ENCODE measurements at regions of chr2 and their contacts with region 1.

Region 1: GRCh38 chr2:11688222-11689069 is 18.5 kb upstream of the NTSR2 start:
- DNase-seq: peak; percentile 67 to 89 (median 82)
- ATAC-seq: peak; percentile 88
- H3K4me3 ChIP-seq: peak overlapping the region; percentile 8 to 12
- H3K27ac ChIP-seq: peak overlapping the region in 1 of 2 donors; percentile 42
- H3K4me1 ChIP-seq: peaks cover 0 to 26% of the 10 kb centered on the region in 2 donors
- H3K27me3 ChIP-seq: peaks cover 0 to 10% of the 10 kb centered on the region in 2 donors
- CTCF ChIP-seq: peak; percentile 81 to 84

Region 2: GRCh38 chr2:11477994-11478393 is 210.5 kb before region 1 on chr2:
- intact Hi-C with region 1: no loop called
- DNase-seq: peak in 3 of 4 donors; percentile 79 to 90 (median 82)
- ATAC-seq: peak; percentile 85
- H3K4me3 ChIP-seq: no peak overlapping the region
- H3K27ac ChIP-seq: no peak overlapping the region
- H3K4me1 ChIP-seq: peaks cover 3 to 10% of the 10 kb centered on the region in 2 donors
- H3K27me3 ChIP-seq: peaks cover 17 to 46% of the 10 kb centered on the region in 2 donors
- CTCF ChIP-seq: peak; percentile 80 to 81

Region 3: GRCh38 chr2:11778923-11779757 is 90.7 kb after region 1 on chr2:
- intact Hi-C with region 1: loop called (anchors 2 to 10 kb)
- DNase-seq: peak; percentile 52 to 94 (median 74)
- ATAC-seq: peak; percentile 99
- H3K4me3 ChIP-seq: no peak overlapping the region
- H3K27ac ChIP-seq: no peak overlapping the region
- H3K4me1 ChIP-seq: peaks cover 7 to 16% of the 10 kb centered on the region in 2 donors
- H3K27me3 ChIP-seq: no peaks in the 10 kb centered on the region
- CTCF ChIP-seq: peak; percentile 89 to 98

Region 4: GRCh38 chr2:11784747-11785610 is 96.5 kb after region 1 on chr2:
- intact Hi-C with region 1: loop called in 1 of 2 experiments (anchors 2 kb)
- DNase-seq: peak in 3 of 4 donors; percentile 68 to 86 (median 74)
- ATAC-seq: peak; percentile 84
- H3K4me3 ChIP-seq: no peak overlapping the region
- H3K27ac ChIP-seq: no peak overlapping the region
- H3K4me1 ChIP-seq: no peaks in the 10 kb centered on the region
- H3K27me3 ChIP-seq: no peaks in the 10 kb centered on the region
- CTCF ChIP-seq: peak; percentile 80 to 92